ENCODE measurements at regions of chr3 and their contacts with region 1.

Region 1: GRCh38 chr3:105195260-105195659 is 171.4 kb upstream of the ALCAM start:
- DNase-seq: no peak
- H3K4me3 ChIP-seq: no peak overlapping the region
- H3K4me3 Mint-ChIP-seq: no peak overlapping the region
- H3K27ac ChIP-seq: no peak overlapping the region
- H3K27ac Mint-ChIP-seq: no peak overlapping the region
- H3K4me1 ChIP-seq: no peaks in the 10 kb centered on the region
- H3K4me1 Mint-ChIP-seq: no peaks in the 10 kb centered on the region
- H3K27me3 ChIP-seq: no peaks in the 10 kb centered on the region
- H3K27me3 Mint-ChIP-seq: peaks cover 0 to 3% (median 0%) of the 10 kb centered on the region in 3 donors
- CTCF ChIP-seq: no peak

Region 2: GRCh38 chr3:104779324-104779723 is 415.9 kb before region 1 on chr3:
- intact Hi-C with region 1: loop called in 1 of 2 experiments (anchors 5 kb)
- DNase-seq: no peak
- H3K4me3 ChIP-seq: no peak overlapping the region
- H3K4me3 Mint-ChIP-seq: no peak overlapping the region
- H3K27ac ChIP-seq: no peak overlapping the region
- H3K27ac Mint-ChIP-seq: no peak overlapping the region
- H3K4me1 ChIP-seq: no peaks in the 10 kb centered on the region
- H3K4me1 Mint-ChIP-seq: no peaks in the 10 kb centered on the region
- H3K27me3 ChIP-seq: no peaks in the 10 kb centered on the region
- H3K27me3 Mint-ChIP-seq: peaks cover 0 to 3% (median 0%) of the 10 kb centered on the region in 3 donors
- CTCF ChIP-seq: no peak

Region 3: GRCh38 chr3:105232553-105232952 is 37.3 kb after region 1 on chr3:
- intact Hi-C with region 1: no loop called
- DNase-seq: no peak
- H3K4me3 ChIP-seq: no peak overlapping the region
- H3K4me3 Mint-ChIP-seq: no peak overlapping the region
- H3K27ac ChIP-seq: no peak overlapping the region
- H3K27ac Mint-ChIP-seq: no peak overlapping the region
- H3K4me1 ChIP-seq: no peaks in the 10 kb centered on the region
- H3K4me1 Mint-ChIP-seq: no peaks in the 10 kb centered on the region
- H3K27me3 ChIP-seq: no peaks in the 10 kb centered on the region
- H3K27me3 Mint-ChIP-seq: peaks cover 0 to 2% (median 0%) of the 10 kb centered on the region in 3 donors
- CTCF ChIP-seq: no peak

Region 4: GRCh38 chr3:105385819-105386508 is 190.7 kb after region 1 on chr3:
- intact Hi-C with region 1: no loop called
- DNase-seq: peak in 2 of 3 donors; percentile 47 to 55
- H3K4me3 ChIP-seq: no peak overlapping the region
- H3K4me3 Mint-ChIP-seq: no peak overlapping the region
- H3K27ac ChIP-seq: peak overlapping the region in 1 of 2 donors; percentile 66
- H3K27ac Mint-ChIP-seq: peak overlapping the region; percentile 43 to 91 (median 78)
- H3K4me1 ChIP-seq: peaks cover 22 to 37% of the 10 kb centered on the region in 2 donors
- H3K4me1 Mint-ChIP-seq: peaks cover 28% of the 10 kb centered on the region
- H3K27me3 ChIP-seq: no peaks in the 10 kb centered on the region
- H3K27me3 Mint-ChIP-seq: no peaks in the 10 kb centered on the region
- CTCF ChIP-seq: no peak